Sciatic nerve (tissue), 2 donors: ENCODE measurements at regions of chr3 and their contacts with region 1.

Region 1: DNA sequence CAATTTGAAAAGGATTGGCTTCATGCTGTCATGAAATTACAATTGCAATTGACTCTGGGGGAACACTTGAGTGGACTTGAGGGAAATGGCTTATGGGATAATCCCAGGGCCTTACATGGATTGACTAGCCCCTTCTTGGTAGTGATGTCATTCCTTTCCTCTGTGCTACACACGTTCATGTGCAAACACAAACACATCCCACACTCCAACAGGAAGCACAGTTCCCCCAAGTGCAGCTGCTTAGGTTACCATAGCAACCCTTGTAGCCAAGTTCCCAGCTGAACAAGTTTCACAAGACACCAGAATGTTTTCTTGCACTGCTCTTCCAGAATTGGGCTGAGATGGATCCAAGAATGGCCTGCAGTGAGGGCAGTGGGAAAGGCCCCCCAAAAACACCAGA is 217.0 kb downstream of the ZNF621 start:
- DNase-seq: no peak
- ATAC-seq: peak; percentile 98

Region 2: GRCh38 chr3:40725031-40725430 is 16.7 kb before region 1 on chr3:
- intact Hi-C with region 1: loop called (anchors 1 kb)
- DNase-seq: no peak
- ATAC-seq: no peak